HepG2 (cell line): ENCODE measurements at regions of chr7 and their contacts with region 1.

Region 1: GRCh38 chr7:109915670-109916069 is 1175.3 kb upstream of the LRRN3 start:
- DNase-seq: no peak
- ATAC-seq: no peak
- H3K4me3 ChIP-seq: no peak overlapping the region
- H3K27ac ChIP-seq: no peak overlapping the region
- H3K4me1 ChIP-seq: no peaks in the 10 kb centered on the region
- H3K27me3 ChIP-seq: no peaks in the 10 kb centered on the region
- CTCF ChIP-seq: no peak
- EP300 ChIP-seq: no peak
- POLR2A ChIP-seq: no peak
- RAD21 ChIP-seq: no peak

Region 2: DNA sequence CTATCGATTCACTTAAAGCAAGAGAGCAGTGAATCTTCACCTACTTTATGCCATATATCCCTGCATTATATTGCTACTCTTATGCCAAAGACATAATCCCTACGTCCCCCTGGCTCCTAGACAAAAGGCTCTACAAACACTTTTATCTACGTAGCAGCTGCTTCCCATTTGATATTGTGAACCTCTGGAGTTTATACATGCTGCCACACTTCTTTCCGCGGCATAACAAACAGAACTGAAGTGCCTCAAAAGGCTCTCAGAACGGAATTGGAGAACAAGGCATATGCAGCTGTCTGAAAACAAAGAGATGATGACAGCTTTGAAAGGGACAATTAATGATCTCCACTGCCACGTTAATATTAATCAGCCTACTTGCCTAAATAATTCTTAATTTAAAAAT is 189.6 kb after region 1 on chr7:
- CTCF ChIA-PET with region 1: no interaction called
- POLR2A ChIA-PET with region 1: no interaction called
- in situ Hi-C with region 1: no loop called
- intact Hi-C with region 1: no loop called
- DNase-seq: no peak
- ATAC-seq: no peak
- H3K4me3 ChIP-seq: no peak overlapping the region
- H3K27ac ChIP-seq: no peak overlapping the region
- H3K4me1 ChIP-seq: no peaks in the 10 kb centered on the region
- H3K27me3 ChIP-seq: no peaks in the 10 kb centered on the region
- CTCF ChIP-seq: no peak
- EP300 ChIP-seq: no peak
- POLR2A ChIP-seq: no peak
- RAD21 ChIP-seq: no peak

Region 3: GRCh38 chr7:110418659-110419280 is 503.1 kb after region 1 on chr7:
- CTCF ChIA-PET with region 1: no interaction called
- POLR2A ChIA-PET with region 1: no interaction called
- in situ Hi-C with region 1: no loop called
- intact Hi-C with region 1: no loop called
- DNase-seq: no peak
- ATAC-seq: no peak
- H3K4me3 ChIP-seq: no peak overlapping the region
- H3K27ac ChIP-seq: no peak overlapping the region
- H3K4me1 ChIP-seq: no peaks in the 10 kb centered on the region
- H3K27me3 ChIP-seq: no peaks in the 10 kb centered on the region
- CTCF ChIP-seq: no peak
- EP300 ChIP-seq: no peak
- POLR2A ChIP-seq: no peak
- RAD21 ChIP-seq: no peak

Region 4: GRCh38 chr7:111138196-111138569 is 1222.5 kb after region 1 on chr7:
- CTCF ChIA-PET with region 1: no interaction called
- POLR2A ChIA-PET with region 1: no interaction called
- in situ Hi-C with region 1: no loop called
- intact Hi-C with region 1: loop called (anchors 10 kb)
- DNase-seq: no peak
- ATAC-seq: no peak
- H3K4me3 ChIP-seq: no peak overlapping the region
- H3K27ac ChIP-seq: no peak overlapping the region
- H3K4me1 ChIP-seq: no peaks in the 10 kb centered on the region
- H3K27me3 ChIP-seq: no peaks in the 10 kb centered on the region
- CTCF ChIP-seq: no peak
- EP300 ChIP-seq: no peak
- POLR2A ChIP-seq: no peak
- RAD21 ChIP-seq: no peak